ENCODE measurements at regions of chr20 and their contacts with region 1.

Region 1: GRCh38 chr20:1810926-1811620 is 84.1 kb upstream of the SIRPA start:
- DNase-seq: peak; percentile 61
- ATAC-seq: peak; percentile 40
- H3K4me3 ChIP-seq: peak overlapping the region in 1 of 3 experiments; percentile 47; a peak in 2 of 6 replicates
- H3K27ac ChIP-seq: peak overlapping the region; percentile 74
- H3K4me1 ChIP-seq: peaks cover 47% of the 10 kb centered on the region
- H3K27me3 ChIP-seq: no peaks in the 10 kb centered on the region
- CTCF ChIP-seq: no peak
- EP300 ChIP-seq: no peak
- POLR2A ChIP-seq: no peak
- RAD21 ChIP-seq: no peak

Region 2: GRCh38 chr20:1871807-1872458 is 60.9 kb after region 1 on chr20:
- CTCF ChIA-PET with region 1: no interaction called
- POLR2A ChIA-PET with region 1: interaction called, 5 read pairs
- in situ Hi-C with region 1: no loop called
- intact Hi-C with region 1: loop called (anchors 1 kb)
- DNase-seq: no peak
- ATAC-seq: no peak
- H3K4me3 ChIP-seq: no peak overlapping the region
- H3K27ac ChIP-seq: no peak overlapping the region
- H3K4me1 ChIP-seq: peaks cover 69% of the 10 kb centered on the region
- H3K27me3 ChIP-seq: no peaks in the 10 kb centered on the region
- CTCF ChIP-seq: no peak
- EP300 ChIP-seq: no peak
- POLR2A ChIP-seq: no peak
- RAD21 ChIP-seq: no peak

Measured in HepG2 (cell line).